ENCODE measurements at regions of chr5 and their contacts with region 1.

Region 1: DNA sequence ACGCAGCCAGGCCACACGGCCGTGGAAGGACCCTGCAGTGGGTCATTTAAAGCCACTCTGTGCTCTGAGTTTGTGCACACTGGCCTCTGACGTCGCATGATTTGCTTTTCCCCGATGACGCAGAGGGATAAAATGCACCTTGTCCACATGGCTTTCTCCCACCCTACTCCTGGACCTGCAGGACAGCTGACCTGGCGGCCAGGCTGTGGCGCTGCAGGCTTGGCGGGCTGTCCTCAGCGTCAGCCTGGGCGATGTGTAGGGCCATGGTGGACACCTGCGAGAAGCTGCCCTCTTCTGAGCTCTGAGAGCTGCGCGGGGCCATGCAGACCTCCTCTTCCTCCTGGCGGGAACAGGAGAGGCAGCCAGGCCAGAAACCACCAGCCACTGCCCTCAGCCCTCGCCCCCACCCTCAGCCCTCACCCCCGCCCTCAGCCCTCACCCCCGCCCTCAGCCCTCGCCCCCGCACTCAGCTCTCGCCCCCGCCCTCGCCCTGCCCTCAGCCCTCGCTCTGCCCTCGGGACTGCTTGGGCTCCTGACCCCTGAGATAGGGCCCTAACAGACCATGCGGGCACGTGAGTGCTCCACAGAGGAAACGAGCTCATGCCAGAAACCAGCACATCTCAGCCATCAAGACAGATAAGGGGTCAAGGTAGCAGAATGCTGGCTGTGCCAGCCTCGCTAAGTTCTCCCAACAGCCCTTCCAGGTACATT is 20.0 kb upstream of the SCGB3A1 start:
- DNase-seq: no peak
- H3K4me3 ChIP-seq: no peak overlapping the region
- H3K27me3 ChIP-seq: no peaks in the 10 kb centered on the region
- CTCF ChIP-seq: no peak

Region 2: GRCh38 chr5:180540050-180540694 is 71.1 kb before region 1 on chr5:
- CTCF ChIA-PET with region 1: no interaction called
- POLR2A ChIA-PET with region 1: no interaction called
- DNase-seq: no peak
- H3K4me3 ChIP-seq: no peak overlapping the region
- H3K27me3 ChIP-seq: no peaks in the 10 kb centered on the region
- CTCF ChIP-seq: no peak

Region 3: DNA sequence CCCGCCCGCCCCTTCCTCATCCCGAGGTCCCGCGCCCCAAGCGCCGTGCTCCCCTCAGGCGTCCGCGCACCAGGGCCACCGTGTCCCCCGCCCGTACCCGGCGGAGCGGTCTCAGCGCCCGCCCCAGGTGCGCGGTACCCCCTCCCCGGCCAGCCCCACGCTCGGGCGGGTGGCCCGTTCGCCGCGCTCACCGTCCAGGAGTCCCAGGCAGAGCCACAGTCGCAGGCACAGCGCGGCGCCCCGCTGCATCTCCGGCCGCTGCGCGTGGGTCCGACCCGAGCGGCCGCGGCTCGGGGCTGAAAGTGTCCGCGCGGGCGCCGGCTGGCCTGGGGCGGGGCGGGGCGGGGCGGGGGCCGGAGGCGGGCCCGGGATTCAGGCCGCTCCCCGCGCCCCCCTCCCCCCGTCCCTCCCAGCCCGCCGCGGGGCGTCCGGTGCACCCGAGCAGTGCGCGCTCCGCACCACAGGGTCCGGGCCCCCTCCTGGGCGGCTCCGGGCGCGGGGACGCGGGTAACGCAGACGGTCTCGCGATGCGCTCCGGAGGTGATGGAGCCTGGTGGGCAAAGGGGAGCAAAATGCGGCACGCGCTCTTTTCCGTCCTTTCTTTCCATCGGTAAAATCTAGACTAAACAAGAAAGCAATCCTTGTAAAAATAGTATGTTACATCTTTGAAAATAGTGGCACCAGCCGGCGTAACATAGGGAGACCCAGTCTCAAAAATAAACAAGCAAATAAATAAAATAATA is 38.2 kb after region 1 on chr5 and contains the start of gene FLT4:
- CTCF ChIA-PET with region 1: no interaction called
- POLR2A ChIA-PET with region 1: interaction called, 19 read pairs
- DNase-seq: no peak
- H3K4me3 ChIP-seq: no peak within 1 kb of the TSS; the same call in 1 of the 2 replicates
- H3K27me3 ChIP-seq: peaks cover 11% of the 10 kb centered on the region
- CTCF ChIP-seq: no peak
- polyA plus RNA-seq, gene FLT4: 0.09 and 0.27 TPM in 2 replicates